ENCODE measurements at regions of chr15 and their contacts with region 1.

Region 1: DNA sequence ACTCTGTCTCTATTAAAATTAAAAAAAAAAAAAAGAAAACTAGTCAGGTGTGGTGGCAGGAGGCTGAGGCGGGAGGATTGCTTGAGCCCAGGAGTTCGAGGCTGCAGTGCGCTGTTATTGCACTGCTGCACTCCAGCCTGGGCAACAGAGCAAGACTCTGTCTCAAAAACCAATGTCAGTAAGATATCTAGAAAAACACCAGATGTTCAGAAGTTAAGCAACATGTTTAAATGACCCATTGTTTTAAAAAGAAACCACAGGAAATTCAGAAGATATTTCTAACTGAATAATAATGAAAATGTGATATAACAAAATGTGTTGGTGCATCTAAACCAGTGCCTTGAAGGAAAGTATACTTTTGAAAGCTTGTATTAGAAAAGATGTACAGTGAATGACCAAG is 203.4 kb upstream of the CGNL1 start:
- DNase-seq: peak; percentile 49
- ATAC-seq: peak; percentile 24
- H3K4me3 ChIP-seq: no peak overlapping the region
- H3K27ac ChIP-seq: peak overlapping the region; percentile 41; the same call in 1 of the 2 replicates
- H3K4me1 ChIP-seq: no peaks in the 10 kb centered on the region; the same call in 1 of the 2 replicates
- H3K27me3 ChIP-seq: no peaks in the 10 kb centered on the region
- CTCF ChIP-seq: no peak
- POLR2A ChIP-seq: no peak
- RAD21 ChIP-seq: no peak

Region 2: GRCh38 chr15:57205996-57206395 is 33.1 kb after region 1 on chr15:
- CTCF ChIA-PET with region 1: interaction called, 11 read pairs
- POLR2A ChIA-PET with region 1: no interaction called
- dilution Hi-C with region 1: no loop called
- in situ Hi-C with region 1: no loop called
- intact Hi-C with region 1: no loop called
- DNase-seq: no peak
- ATAC-seq: no peak
- H3K4me3 ChIP-seq: no peak overlapping the region
- H3K27ac ChIP-seq: no peak overlapping the region
- H3K4me1 ChIP-seq: peaks cover 2% of the 10 kb centered on the region; the same call in 1 of the 2 replicates
- H3K27me3 ChIP-seq: no peaks in the 10 kb centered on the region
- CTCF ChIP-seq: no peak
- POLR2A ChIP-seq: no peak
- RAD21 ChIP-seq: no peak

Region 3: DNA sequence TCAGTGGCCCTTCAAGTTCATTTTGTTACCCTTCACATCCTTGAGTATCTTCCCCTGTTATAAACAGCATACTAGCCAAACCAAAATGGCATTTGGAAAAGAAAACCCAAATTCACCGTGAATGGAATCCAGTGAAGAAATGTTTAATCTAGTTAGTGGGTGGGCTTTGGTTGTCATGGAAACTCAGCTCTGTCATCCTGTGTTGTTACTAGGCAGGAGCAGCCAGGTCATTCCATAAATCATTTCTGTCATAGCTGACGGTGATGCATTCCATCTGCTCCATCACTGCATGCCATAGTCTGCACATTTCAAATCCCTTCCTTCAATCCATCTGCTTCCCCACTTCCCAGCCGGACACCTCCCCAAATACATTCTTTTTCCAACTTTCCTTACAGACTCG is 62.9 kb after region 1 on chr15:
- CTCF ChIA-PET with region 1: no interaction called
- POLR2A ChIA-PET with region 1: no interaction called
- dilution Hi-C with region 1: no loop called
- in situ Hi-C with region 1: no loop called
- intact Hi-C with region 1: no loop called
- DNase-seq: peak; percentile 86
- ATAC-seq: peak; percentile 57
- H3K4me3 ChIP-seq: no peak overlapping the region
- H3K27ac ChIP-seq: no peak overlapping the region
- H3K4me1 ChIP-seq: peaks cover 11% of the 10 kb centered on the region
- H3K27me3 ChIP-seq: no peaks in the 10 kb centered on the region
- CTCF ChIP-seq: no peak
- POLR2A ChIP-seq: no peak
- RAD21 ChIP-seq: no peak; the same call in 1 of the 2 replicates